ENCODE measurements at regions of chr19 and their contacts with region 1.

Region 1: GRCh38 chr19:54674021-54674617 is 11.3 kb downstream of the LILRB4 start:
- DNase-seq: peak; percentile 24
- H3K4me3 ChIP-seq: no peak overlapping the region; a peak in 1 of 4 replicates
- H3K27ac ChIP-seq: no peak overlapping the region
- H3K4me1 ChIP-seq: no peaks in the 10 kb centered on the region
- H3K27me3 ChIP-seq: peaks cover 5% of the 10 kb centered on the region; the same call in 1 of the 2 replicates
- CTCF ChIP-seq: peak; percentile 79
- EP300 ChIP-seq: no peak
- RAD21 ChIP-seq: peak; percentile 49

Region 2: DNA sequence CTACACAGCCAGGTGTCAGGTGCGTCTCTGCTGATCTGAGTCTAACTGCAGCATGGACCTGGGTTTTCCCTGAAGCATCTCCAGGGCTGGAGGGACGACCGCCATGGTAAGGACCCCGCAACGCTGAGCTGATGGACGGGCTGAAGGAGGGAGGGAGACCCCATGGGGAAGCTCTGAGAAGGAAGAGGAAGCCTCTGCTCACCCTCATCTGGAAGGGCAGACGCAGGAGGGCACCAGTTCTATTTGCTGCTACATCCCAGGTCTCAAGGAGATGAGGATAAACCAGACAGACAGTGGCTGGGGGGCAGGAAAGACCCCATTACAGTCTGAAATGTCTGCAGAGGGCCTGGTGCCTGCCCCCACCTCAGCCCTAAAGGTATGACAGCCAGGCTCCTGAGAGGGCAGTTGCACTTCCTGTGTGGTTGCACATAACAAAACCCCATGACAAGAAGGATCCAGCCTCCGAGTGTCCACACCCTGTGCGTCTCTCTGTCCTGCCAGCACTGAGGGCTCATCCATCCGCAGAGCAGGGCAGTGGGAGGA is 100.7 kb before region 1 on chr19 and contains the start of gene LILRA2:
- CTCF ChIA-PET with region 1: no interaction called
- POLR2A ChIA-PET with region 1: no interaction called
- DNase-seq: no peak
- H3K4me3 ChIP-seq: no peak within 1 kb of the TSS
- H3K27ac ChIP-seq: no peak within 1 kb of the TSS
- H3K4me1 ChIP-seq: no peaks in the 10 kb centered on the region
- H3K27me3 ChIP-seq: peaks cover 24% of the 10 kb centered on the region
- CTCF ChIP-seq: no peak
- EP300 ChIP-seq: no peak
- RAD21 ChIP-seq: no peak
- polyA plus RNA-seq, gene LILRA2: not detected in 2 replicates

Region 3: GRCh38 chr19:54653181-54653809 is 20.8 kb before region 1 on chr19:
- CTCF ChIA-PET with region 1: interaction called, 48 read pairs
- POLR2A ChIA-PET with region 1: no interaction called
- DNase-seq: peak; percentile 41
- H3K4me3 ChIP-seq: no peak overlapping the region
- H3K27ac ChIP-seq: no peak overlapping the region
- H3K4me1 ChIP-seq: no peaks in the 10 kb centered on the region
- H3K27me3 ChIP-seq: peaks cover 29% of the 10 kb centered on the region; the same call in 1 of the 2 replicates
- CTCF ChIP-seq: peak; percentile 73
- EP300 ChIP-seq: no peak
- RAD21 ChIP-seq: peak; percentile 47; the same call in 1 of the 2 replicates

Region 4: GRCh38 chr19:54662730-54663129 is 11.4 kb before region 1 on chr19 and contains the start of gene LILRB4:
- CTCF ChIA-PET with region 1: interaction called, 34 read pairs
- POLR2A ChIA-PET with region 1: no interaction called
- DNase-seq: no peak
- H3K4me3 ChIP-seq: no peak within 1 kb of the TSS
- H3K27ac ChIP-seq: no peak within 1 kb of the TSS
- H3K4me1 ChIP-seq: no peaks in the 10 kb centered on the region
- H3K27me3 ChIP-seq: peaks cover 31% of the 10 kb centered on the region; the same call in 1 of the 2 replicates
- CTCF ChIP-seq: no peak
- EP300 ChIP-seq: no peak
- RAD21 ChIP-seq: no peak
- polyA plus RNA-seq, gene LILRB4: not detected in 2 replicates

Region 5: DNA sequence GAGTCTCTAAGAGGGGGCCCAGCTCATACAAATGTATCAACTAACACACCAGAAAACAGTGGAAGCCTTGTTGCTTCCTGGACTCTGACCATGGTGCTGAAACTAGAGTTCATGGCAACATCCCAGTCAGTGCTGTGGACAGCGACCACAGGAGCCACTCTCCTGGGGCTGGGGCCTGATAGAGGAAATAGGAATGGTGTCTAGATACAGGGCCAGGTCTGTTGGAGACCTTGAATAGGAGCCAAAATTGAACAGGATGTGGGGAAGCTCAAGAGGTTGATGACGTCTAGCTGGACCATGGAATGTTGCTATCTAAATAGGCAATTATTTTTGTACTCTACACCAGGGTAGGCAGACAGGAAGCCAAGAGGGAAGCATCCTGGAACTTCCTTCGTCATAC is 10.4 kb after region 1 on chr19:
- CTCF ChIA-PET with region 1: interaction called, 28 read pairs
- POLR2A ChIA-PET with region 1: no interaction called
- DNase-seq: no peak
- H3K4me3 ChIP-seq: no peak overlapping the region
- H3K27ac ChIP-seq: no peak overlapping the region
- H3K4me1 ChIP-seq: no peaks in the 10 kb centered on the region
- H3K27me3 ChIP-seq: no peaks in the 10 kb centered on the region
- CTCF ChIP-seq: no peak
- EP300 ChIP-seq: no peak
- RAD21 ChIP-seq: no peak

Region 6: GRCh38 chr19:54707962-54708361 is 33.8 kb after region 1 on chr19:
- CTCF ChIA-PET with region 1: no interaction called
- POLR2A ChIA-PET with region 1: no interaction called
- DNase-seq: no peak
- H3K4me3 ChIP-seq: no peak overlapping the region
- H3K27ac ChIP-seq: no peak overlapping the region
- H3K4me1 ChIP-seq: no peaks in the 10 kb centered on the region
- H3K27me3 ChIP-seq: no peaks in the 10 kb centered on the region
- CTCF ChIP-seq: no peak
- EP300 ChIP-seq: no peak
- RAD21 ChIP-seq: no peak